Right cardiac atrium (tissue), 5 donors: ENCODE measurements at regions of chr13 and their contacts with region 1.

Region 1: GRCh38 chr13:65656740-65657329 is 1573.3 kb downstream of the PCDH9 start:
- DNase-seq: no peak
- ATAC-seq: no peak
- H3K4me3 ChIP-seq: no peak overlapping the region
- H3K27ac ChIP-seq: no peak overlapping the region
- H3K4me1 ChIP-seq: no peaks in the 10 kb centered on the region
- H3K27me3 ChIP-seq: no peaks in the 10 kb centered on the region

Region 2: GRCh38 chr13:67224148-67224846 is 1567.5 kb after region 1 on chr13:
- intact Hi-C with region 1: loop called in 1 of 4 experiments (anchors 10 kb)
- DNase-seq: peak; percentile 74 to 90 (median 88)
- ATAC-seq: peak; percentile 84 to 89
- H3K4me3 ChIP-seq: peak overlapping the region; percentile 43
- H3K27ac ChIP-seq: no peak overlapping the region
- H3K4me1 ChIP-seq: peaks cover 7% of the 10 kb centered on the region
- H3K27me3 ChIP-seq: no peaks in the 10 kb centered on the region

Region 3: DNA sequence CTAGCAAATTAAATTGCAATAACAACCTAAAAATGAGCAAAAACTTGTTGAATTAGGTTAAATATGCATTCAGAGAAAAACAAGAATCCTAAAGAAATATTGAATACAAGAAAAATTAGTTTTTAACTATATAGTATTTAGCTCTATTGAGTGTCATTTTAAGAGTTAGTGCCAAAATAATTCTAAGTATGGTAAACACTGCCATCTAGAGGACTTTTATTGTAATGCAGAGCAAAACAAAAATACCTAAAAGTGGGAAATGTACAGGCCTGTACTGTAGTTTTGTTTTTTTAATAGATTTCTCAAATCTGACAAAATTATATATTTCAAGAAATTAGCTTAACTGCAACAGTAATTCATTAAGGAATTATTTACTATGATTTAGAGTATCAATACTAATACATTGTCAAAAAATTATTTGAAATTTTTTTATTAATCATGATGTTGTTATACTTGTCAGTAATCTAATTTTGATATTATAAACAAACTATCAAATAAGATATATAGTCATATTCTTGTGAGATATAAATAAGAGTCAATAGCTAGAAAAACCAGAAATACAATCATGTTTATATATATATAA is 1581.5 kb after region 1 on chr13:
- intact Hi-C with region 1: loop called in 1 of 4 experiments (anchors 10 kb)
- DNase-seq: no peak
- ATAC-seq: no peak
- H3K4me3 ChIP-seq: no peak overlapping the region
- H3K27ac ChIP-seq: no peak overlapping the region
- H3K4me1 ChIP-seq: no peaks in the 10 kb centered on the region
- H3K27me3 ChIP-seq: no peaks in the 10 kb centered on the region